Activated naive CD4-positive, alpha-beta T cell treated with anti-CD3 and anti-CD28 coated beads for 36 hours (primary cell): ENCODE measurements at regions of chr17 and their contacts with region 1.

Region 1: DNA sequence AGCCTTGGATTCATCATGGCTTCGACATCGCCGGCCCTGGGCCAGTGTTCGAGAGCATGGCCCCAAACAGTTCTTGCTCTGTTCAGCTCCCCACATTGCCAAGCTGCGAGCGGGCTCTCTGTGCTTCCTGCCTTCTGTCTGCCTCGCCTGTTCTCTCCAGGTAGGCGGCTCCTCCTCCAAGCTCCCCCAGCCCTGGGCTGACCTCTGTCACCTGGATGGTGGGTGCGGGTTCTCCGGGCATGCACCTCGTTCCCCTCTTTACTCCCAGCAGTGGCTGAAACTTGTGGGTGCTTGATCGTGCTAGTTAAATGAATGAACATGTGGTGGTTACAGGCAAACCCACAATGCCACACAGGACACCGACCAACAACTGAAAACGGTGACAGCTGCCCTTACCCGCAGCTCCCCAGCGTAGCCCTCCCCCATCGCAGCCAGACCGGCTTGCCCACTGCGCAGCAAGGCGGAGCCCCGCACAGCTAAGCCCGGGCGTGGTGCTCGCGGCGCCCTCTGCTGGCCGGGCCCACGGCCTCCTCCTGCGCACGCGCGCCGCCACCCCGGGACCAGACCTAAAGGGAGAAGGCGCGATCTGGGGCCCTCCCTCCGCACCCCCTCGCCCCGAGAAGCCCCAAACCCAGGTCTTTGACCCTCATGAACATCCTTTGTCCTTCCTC is 23.0 kb upstream of the EIF1 start:
- DNase-seq: peak; percentile 91
- H3K4me3 Mint-ChIP-seq: peak overlapping the region; percentile 90
- H3K27ac Mint-ChIP-seq: peak overlapping the region; percentile 98
- H3K4me1 Mint-ChIP-seq: peaks cover 39% of the 10 kb centered on the region
- H3K27me3 Mint-ChIP-seq: no peaks in the 10 kb centered on the region

Region 2: DNA sequence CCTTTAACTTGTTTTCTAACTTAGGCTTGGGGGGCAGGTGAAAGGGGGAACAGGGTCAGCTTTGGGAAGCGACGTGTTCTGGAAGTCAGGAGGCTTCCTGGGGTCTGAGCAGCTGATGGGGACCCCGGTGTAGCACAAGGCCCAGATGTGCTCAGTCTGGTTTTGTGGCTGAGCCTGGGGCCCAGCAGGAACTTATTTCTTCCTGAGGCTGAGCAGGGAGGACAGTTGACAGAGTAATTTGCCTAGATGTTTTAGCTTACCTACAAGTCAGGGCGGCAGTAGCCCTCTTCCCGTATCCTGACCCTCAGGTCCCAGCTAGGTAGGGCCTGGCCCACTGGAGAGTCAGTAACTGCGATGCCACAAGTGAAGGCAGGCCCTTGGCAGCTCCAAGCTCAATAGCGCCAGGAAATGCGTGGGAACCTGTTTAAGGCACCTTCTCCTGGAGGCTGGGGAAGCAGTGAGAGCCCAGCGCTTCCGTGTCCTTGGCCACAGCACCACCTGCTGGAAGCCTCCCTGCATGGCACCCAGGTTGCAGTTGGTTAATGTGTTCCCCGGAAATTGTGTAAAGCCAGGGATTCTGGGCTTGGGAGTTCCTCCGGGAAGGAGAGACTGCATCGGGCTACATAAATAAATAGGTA is 1105.6 kb before region 1 on chr17:
- CTCF ChIA-PET with region 1: no interaction called
- intact Hi-C with region 1: loop called (anchors 5 kb)
- DNase-seq: peak; percentile 93
- H3K4me3 Mint-ChIP-seq: peak overlapping the region; percentile 96
- H3K27ac Mint-ChIP-seq: peak overlapping the region; percentile 100
- H3K4me1 Mint-ChIP-seq: peaks cover 66% of the 10 kb centered on the region
- H3K27me3 Mint-ChIP-seq: no peaks in the 10 kb centered on the region

Region 3: GRCh38 chr17:41322094-41322902 is 343.4 kb before region 1 on chr17:
- CTCF ChIA-PET with region 1: interaction called, 6 read pairs
- intact Hi-C with region 1: loop called (anchors 5 kb)
- DNase-seq: peak; percentile 28
- H3K4me3 Mint-ChIP-seq: no peak overlapping the region
- H3K27ac Mint-ChIP-seq: no peak overlapping the region
- H3K4me1 Mint-ChIP-seq: peaks cover 37% of the 10 kb centered on the region
- H3K27me3 Mint-ChIP-seq: no peaks in the 10 kb centered on the region

Region 4: DNA sequence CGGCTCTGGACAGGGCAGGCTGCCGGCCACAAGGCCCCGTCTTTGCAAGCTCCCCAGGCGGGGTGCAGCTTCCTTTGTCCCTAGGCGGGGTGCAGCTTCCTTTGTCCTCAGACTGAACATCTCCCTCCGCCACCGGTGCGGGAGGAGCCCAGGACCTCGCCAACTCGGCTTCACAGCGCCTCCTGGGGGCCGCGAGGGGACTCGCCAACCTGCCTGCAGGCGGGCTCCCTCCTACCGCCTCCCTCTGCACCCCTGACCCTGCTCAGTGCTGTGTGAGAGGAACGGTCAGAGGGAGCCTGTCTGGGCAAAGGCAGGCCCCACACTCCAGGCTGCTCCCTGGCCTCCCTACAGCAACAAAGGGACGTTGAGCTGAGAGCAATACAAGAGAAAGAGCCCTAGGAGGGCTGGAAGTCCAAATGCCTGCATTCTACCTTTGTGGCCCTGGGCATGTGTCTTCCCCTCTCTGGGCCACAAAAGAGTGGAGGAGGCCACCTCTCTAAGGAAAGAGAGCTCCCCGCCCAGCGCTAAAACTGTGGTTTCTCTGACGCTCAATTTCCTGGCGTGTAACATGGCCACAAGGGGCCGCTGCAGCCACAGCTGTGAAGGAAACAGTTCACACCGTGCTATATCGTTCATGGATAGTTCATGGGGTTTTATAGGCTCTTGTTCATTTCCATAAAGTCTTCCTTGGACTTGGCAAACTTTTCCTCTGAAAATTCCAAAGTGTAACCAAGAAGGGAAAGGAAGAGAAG is 116.7 kb before region 1 on chr17:
- CTCF ChIA-PET with region 1: interaction called, 114 read pairs
- intact Hi-C with region 1: loop called (anchors 1 kb)
- DNase-seq: peak; percentile 94
- H3K4me3 Mint-ChIP-seq: no peak overlapping the region
- H3K27ac Mint-ChIP-seq: no peak overlapping the region
- H3K4me1 Mint-ChIP-seq: peaks cover 18% of the 10 kb centered on the region
- H3K27me3 Mint-ChIP-seq: no peaks in the 10 kb centered on the region

Region 5: DNA sequence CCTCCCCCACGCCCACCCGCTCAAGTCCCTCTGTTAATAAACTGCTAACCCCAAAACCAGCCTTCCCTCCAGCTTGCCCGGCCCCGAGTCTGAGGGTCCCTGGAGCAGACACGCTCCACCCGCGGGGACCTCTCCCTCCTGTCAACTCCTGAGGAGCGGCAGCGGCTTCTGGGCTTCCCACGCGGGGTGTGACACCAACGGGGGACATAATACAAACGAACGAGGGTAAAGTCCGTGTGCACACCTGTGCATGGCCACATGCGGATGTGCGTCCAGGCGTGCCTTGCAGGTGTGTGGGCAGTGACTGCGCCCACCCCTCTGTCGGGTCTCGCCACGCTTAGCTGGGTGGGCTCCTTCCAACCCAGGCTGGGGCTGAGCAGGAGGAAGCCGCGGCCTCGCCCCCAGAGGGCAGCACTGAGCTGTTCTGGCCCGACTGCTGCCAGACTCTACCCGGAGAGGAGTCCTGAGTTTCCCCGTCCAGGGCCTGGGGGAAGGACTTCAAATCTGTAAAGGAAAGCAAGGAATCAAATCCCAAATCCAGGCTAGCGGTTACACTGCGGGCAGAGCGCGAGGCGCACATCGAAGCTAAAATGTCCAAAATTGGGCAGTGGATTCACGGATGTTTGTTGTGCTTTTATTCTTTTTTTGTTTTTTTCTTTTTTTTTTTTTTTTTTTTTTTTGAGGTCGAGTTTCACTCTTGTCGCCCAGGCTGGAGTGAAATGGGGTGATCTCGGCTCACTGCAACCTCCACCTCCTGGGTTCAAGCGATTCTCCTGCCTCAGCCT is 17.1 kb before region 1 on chr17:
- CTCF ChIA-PET with region 1: interaction called, 295 read pairs
- intact Hi-C with region 1: loop called (anchors 1 kb)
- DNase-seq: peak; percentile 89
- H3K4me3 Mint-ChIP-seq: peak overlapping the region; percentile 43
- H3K27ac Mint-ChIP-seq: no peak overlapping the region
- H3K4me1 Mint-ChIP-seq: peaks cover 8% of the 10 kb centered on the region
- H3K27me3 Mint-ChIP-seq: no peaks in the 10 kb centered on the region

Region 6: GRCh38 chr17:41695954-41696756 is 30.5 kb after region 1 on chr17:
- CTCF ChIA-PET with region 1: interaction called, 34 read pairs
- intact Hi-C with region 1: no loop called
- DNase-seq: peak; percentile 90
- H3K4me3 Mint-ChIP-seq: no peak overlapping the region
- H3K27ac Mint-ChIP-seq: peak overlapping the region; percentile 63
- H3K4me1 Mint-ChIP-seq: peaks cover 16% of the 10 kb centered on the region
- H3K27me3 Mint-ChIP-seq: no peaks in the 10 kb centered on the region

Region 7: GRCh38 chr17:42087736-42088705 is 422.3 kb after region 1 on chr17:
- CTCF ChIA-PET with region 1: no interaction called
- intact Hi-C with region 1: no loop called
- DNase-seq: no peak
- H3K4me3 Mint-ChIP-seq: no peak overlapping the region
- H3K27ac Mint-ChIP-seq: no peak overlapping the region
- H3K4me1 Mint-ChIP-seq: no peaks in the 10 kb centered on the region
- H3K27me3 Mint-ChIP-seq: no peaks in the 10 kb centered on the region